PC-9 (cell line): ENCODE measurements at regions of chr11 and their contacts with region 1.

Region 1: DNA sequence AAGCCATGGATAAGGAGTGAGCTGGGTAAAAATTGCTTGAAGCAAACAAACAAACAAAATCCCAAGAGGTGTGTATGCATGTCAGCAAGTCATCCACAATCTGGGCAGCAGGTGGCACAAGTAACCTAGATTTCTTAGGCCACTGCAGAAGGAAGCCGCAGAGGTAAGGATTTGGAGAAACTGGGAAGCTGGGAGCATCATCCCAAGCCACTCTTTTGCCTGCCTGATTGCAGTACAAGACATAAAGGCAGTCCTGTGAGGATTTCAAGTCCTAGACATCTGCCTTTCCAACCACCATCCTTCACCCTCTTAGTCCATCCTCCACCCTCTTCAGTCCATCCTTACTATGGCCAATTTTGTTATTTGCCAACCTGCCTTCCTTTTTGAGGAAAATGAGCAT is 67.2 kb upstream of the BMAL1 start:
- DNase-seq: peak; percentile 39 to 44
- H3K4me3 ChIP-seq: no peak overlapping the region
- H3K27ac ChIP-seq: no peak overlapping the region
- H3K4me1 ChIP-seq: peaks cover 62% of the 10 kb centered on the region
- H3K27me3 ChIP-seq: no peaks in the 10 kb centered on the region
- CTCF ChIP-seq: peak; percentile 78

Region 2: DNA sequence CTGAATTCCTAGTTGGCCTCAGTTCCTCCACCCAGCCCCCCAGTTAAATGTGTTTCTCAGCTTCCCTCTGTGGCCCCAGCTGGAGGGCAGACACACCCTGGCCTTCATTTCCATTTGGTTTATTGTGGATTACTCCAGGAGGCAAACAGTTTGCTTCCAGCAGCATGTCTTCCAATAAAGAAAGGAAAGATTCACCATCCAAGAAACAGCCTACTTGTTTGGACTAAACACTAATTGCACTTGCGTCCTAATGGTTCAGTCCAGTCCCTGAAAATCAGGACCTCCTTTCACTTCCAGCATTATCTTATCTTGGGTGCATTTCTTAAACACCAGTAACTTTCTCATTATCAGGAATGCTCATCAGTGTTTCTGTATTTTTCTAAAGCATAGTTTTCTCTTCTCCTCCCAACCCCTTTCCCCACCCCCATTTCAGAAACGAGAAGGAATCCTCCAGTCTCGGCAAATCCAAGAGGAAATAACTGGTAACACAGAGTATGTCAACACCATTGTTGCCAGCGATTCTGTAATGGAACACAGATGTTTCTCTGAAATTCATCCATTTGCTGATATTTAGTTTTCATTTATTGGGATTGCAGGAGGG is 702.2 kb before region 1 on chr11:
- CTCF ChIA-PET with region 1: no interaction called
- POLR2A ChIA-PET with region 1: no interaction called
- intact Hi-C with region 1: no loop called
- DNase-seq: no peak
- H3K4me3 ChIP-seq: no peak overlapping the region
- H3K27ac ChIP-seq: no peak overlapping the region
- H3K4me1 ChIP-seq: no peaks in the 10 kb centered on the region
- H3K27me3 ChIP-seq: no peaks in the 10 kb centered on the region
- CTCF ChIP-seq: no peak

Region 3: GRCh38 chr11:13183094-13183825 is 27.2 kb before region 1 on chr11:
- CTCF ChIA-PET with region 1: no interaction called
- POLR2A ChIA-PET with region 1: no interaction called
- intact Hi-C with region 1: loop called (anchors 1 kb)
- DNase-seq: peak; percentile 22 to 66
- H3K4me3 ChIP-seq: peak overlapping the region; percentile 39; the same call in 1 of the 2 replicates
- H3K27ac ChIP-seq: peak overlapping the region; percentile 42
- H3K4me1 ChIP-seq: peaks cover 12% of the 10 kb centered on the region; the same call in 1 of the 2 replicates
- H3K27me3 ChIP-seq: no peaks in the 10 kb centered on the region
- CTCF ChIP-seq: peak; percentile 56

Region 4: DNA sequence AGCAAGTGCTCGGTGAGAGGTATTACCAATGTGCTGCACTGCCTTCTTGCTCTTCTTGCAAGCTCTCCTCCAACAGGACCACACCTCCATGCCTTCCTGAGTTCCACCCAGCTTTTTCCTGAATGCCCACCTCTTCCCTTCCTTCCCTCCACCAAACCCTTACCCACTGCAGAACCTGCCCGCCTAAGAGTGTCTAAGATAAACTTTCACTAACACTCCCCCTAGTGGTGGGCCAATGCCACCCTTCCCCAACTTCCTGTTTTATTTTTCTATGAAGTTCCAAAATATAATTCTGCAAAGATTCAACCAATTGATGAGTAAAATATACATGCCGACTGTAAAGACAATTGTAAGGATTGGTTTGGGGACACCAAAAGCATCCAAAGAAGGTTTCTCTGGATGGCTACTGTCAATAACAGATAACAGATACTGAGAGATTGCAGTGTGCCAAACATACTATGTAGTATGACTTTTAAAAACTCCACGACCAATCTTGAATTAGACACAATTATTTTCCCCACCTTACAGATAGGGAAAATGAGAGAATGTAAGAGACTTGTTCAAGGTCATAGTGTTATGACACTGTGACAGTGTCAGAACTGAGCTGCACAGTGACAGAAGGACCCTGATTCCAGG is 28.6 kb after region 1 on chr11:
- CTCF ChIA-PET with region 1: interaction called, 3 read pairs
- POLR2A ChIA-PET with region 1: no interaction called
- intact Hi-C with region 1: loop called (anchors 2 kb)
- DNase-seq: no peak
- H3K4me3 ChIP-seq: no peak overlapping the region
- H3K27ac ChIP-seq: no peak overlapping the region
- H3K4me1 ChIP-seq: no peaks in the 10 kb centered on the region
- H3K27me3 ChIP-seq: no peaks in the 10 kb centered on the region
- CTCF ChIP-seq: peak; percentile 83

Region 5: DNA sequence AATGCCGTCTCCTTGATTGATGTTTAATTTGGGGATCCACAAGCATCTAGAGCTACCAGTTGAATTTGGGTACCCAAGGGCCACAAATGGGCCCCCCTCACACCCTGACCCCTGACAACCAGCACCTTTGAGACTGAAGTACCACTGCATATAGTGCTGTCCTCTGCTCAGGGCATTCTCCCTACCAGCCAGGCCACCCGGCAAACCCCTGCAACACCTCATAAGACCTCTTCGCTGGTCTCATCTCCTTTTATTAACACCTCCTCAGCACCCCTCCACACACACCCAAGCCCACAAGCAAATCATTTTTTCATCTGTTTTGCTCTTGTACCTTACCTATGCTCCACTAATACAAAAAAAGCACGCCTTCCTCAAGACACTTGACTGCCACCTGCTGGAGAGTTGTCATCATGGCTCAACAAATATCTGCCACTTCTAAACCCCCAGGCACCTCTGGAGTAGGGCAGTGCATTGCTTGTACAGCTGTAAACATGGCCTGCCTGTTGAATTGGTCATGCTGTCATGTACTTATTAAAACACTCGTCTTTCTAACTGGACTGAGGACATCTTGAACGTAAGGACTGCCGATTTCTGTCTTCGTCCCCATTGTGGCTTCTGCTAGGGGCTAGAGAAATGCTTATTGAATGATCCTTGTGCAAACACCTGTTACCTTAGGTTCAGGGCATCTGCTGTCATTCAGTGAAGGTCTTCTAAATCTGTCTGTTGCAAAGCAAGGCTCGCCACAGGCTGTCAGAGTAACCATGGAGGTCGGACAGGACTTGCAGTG is 133.7 kb after region 1 on chr11:
- CTCF ChIA-PET with region 1: interaction called, 6 read pairs
- POLR2A ChIA-PET with region 1: no interaction called
- intact Hi-C with region 1: loop called (anchors 1 kb)
- DNase-seq: peak; percentile 49 to 59
- H3K4me3 ChIP-seq: no peak overlapping the region
- H3K27ac ChIP-seq: no peak overlapping the region
- H3K4me1 ChIP-seq: peaks cover under 1% of the 10 kb centered on the region; the same call in 1 of the 2 replicates
- H3K27me3 ChIP-seq: no peaks in the 10 kb centered on the region
- CTCF ChIP-seq: peak; percentile 82

Region 6: DNA sequence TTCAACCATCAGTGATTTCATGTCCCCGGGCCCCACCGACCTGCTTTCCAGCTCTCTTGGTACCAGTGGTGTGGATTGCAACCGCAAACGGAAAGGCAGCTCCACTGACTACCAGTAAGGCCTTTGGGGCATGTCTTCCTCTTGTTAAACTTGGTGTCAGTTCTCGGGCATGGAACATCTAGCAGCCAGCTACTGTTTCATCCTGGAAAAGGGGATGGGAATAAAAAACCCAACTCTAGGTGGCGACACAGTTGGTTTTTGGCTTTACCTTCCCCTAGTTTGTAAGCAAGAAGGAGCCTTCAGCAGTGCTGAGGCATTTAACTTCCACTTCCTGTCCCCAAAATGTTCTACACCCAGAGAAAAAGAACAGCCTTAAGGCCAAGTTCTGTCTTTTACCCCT is 143.9 kb after region 1 on chr11:
- CTCF ChIA-PET with region 1: no interaction called
- POLR2A ChIA-PET with region 1: interaction called, 10 read pairs
- intact Hi-C with region 1: no loop called
- DNase-seq: no peak
- H3K4me3 ChIP-seq: no peak overlapping the region
- H3K27ac ChIP-seq: no peak overlapping the region
- H3K4me1 ChIP-seq: no peaks in the 10 kb centered on the region
- H3K27me3 ChIP-seq: no peaks in the 10 kb centered on the region
- CTCF ChIP-seq: peak; percentile 35; the same call in 1 of the 2 replicates

Region 7: GRCh38 chr11:13384908-13385640 is 174.7 kb after region 1 on chr11:
- CTCF ChIA-PET with region 1: interaction called, 6 read pairs
- POLR2A ChIA-PET with region 1: no interaction called
- intact Hi-C with region 1: loop called (anchors 1 kb)
- DNase-seq: peak in 1 of 2 experiments; percentile 6
- H3K4me3 ChIP-seq: no peak overlapping the region
- H3K27ac ChIP-seq: no peak overlapping the region
- H3K4me1 ChIP-seq: no peaks in the 10 kb centered on the region
- H3K27me3 ChIP-seq: no peaks in the 10 kb centered on the region
- CTCF ChIP-seq: peak; percentile 68